Heart right ventricle (tissue), 16 donors: ENCODE measurements at regions of chr17 and their contacts with region 1.

Region 1: GRCh38 chr17:8041249-8041928 is 2.5 kb downstream of the ALOX15B start:
- DNase-seq: no peak
- ATAC-seq: peak in 7 of 8 donors; percentile 30 to 88 (median 66)
- H3K4me3 ChIP-seq: no peak overlapping the region
- H3K27ac ChIP-seq: peak overlapping the region in 1 of 10 donors; percentile 51
- H3K4me1 ChIP-seq: peaks cover 0 to 28% (median 4%) of the 10 kb centered on the region in 9 donors
- H3K27me3 ChIP-seq: peaks cover 0 to 44% (median 34%) of the 10 kb centered on the region in 7 donors
- CTCF ChIP-seq: peak; percentile 29 to 71 (median 66)

Region 2: DNA sequence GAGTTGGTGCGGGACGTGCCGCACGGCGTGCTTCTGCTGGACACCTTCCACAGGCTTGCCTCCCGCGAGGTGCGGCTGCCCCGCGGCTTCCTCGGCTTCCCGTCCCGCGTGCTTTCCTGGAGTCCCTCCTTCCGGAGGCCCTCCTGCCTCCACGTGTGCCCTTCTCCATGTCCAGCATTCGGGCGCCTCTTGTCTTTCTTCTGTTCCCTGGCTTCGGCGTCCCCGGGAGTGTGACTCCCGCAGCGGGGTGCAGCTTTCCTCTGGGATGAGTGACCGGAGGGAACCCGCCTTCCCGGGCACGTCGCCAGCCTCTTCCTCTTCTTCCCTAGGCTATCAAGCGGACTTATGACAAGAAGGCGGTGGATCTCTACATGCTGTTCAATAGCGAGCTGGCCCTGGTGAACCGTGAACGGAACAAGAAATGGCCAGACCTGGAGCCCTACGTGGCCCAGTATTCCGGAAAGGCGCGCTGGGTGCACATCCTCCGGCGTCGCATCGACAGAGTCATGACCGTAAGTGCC is 300.8 kb before region 1 on chr17:
- intact Hi-C with region 1: loop called in 3 of 10 experiments (anchors 5 to 10 kb)
- DNase-seq: peak in 1 of 2 donors; percentile 27
- ATAC-seq: peak in 2 of 8 donors; percentile 13 to 43
- H3K4me3 ChIP-seq: peak overlapping the region in 6 of 10 donors; percentile 7 to 41 (median 22)
- H3K27ac ChIP-seq: no peak overlapping the region
- H3K4me1 ChIP-seq: peaks cover 0 to 15% (median 0%) of the 10 kb centered on the region in 9 donors
- H3K27me3 ChIP-seq: peaks cover 0 to 31% (median 14%) of the 10 kb centered on the region in 7 donors
- CTCF ChIP-seq: no peak

Region 3: DNA sequence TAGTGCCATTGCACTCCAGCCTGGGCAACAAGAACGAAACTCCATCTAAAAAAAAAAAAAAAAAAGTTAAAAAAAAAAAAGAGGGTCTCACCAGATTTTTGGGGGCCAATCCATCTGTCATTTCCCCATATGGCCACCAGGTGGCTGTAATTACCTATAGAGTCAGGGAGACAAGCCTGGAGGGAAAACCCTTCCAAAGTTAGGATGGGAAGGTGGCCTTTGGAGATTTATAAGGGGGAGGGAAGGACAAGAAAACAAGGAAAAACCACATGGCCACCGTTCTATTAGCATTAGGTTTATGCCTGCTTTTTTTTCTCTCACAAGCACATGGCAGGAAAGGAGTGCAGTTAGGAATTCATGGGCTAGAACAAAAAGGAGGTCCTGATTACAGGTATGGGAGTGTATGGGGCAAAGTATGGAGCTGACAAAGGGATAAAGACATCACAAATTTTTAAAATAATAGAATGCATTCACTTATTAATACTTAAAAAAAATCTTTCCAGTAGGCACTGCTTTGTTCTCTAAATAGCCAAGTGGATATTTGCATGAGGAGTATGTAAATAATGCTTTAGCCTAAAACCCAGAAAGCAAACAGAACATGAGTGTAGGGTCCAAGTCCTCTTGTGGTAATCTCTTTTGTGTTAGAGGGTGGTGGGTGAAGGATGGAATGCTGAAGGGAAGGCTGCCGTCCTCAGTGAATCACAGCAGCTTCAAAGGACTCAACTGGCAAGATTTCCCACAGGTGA is 178.5 kb before region 1 on chr17:
- intact Hi-C with region 1: loop called in 4 of 10 experiments (anchors 5 to 10 kb)
- DNase-seq: peak in 1 of 2 donors; percentile 62
- ATAC-seq: no peak
- H3K4me3 ChIP-seq: no peak overlapping the region
- H3K27ac ChIP-seq: no peak overlapping the region
- H3K4me1 ChIP-seq: peaks cover 0 to 26% (median 14%) of the 10 kb centered on the region in 9 donors
- H3K27me3 ChIP-seq: no peaks in the 10 kb centered on the region
- CTCF ChIP-seq: peak; percentile 65 to 83 (median 81)

Region 4: DNA sequence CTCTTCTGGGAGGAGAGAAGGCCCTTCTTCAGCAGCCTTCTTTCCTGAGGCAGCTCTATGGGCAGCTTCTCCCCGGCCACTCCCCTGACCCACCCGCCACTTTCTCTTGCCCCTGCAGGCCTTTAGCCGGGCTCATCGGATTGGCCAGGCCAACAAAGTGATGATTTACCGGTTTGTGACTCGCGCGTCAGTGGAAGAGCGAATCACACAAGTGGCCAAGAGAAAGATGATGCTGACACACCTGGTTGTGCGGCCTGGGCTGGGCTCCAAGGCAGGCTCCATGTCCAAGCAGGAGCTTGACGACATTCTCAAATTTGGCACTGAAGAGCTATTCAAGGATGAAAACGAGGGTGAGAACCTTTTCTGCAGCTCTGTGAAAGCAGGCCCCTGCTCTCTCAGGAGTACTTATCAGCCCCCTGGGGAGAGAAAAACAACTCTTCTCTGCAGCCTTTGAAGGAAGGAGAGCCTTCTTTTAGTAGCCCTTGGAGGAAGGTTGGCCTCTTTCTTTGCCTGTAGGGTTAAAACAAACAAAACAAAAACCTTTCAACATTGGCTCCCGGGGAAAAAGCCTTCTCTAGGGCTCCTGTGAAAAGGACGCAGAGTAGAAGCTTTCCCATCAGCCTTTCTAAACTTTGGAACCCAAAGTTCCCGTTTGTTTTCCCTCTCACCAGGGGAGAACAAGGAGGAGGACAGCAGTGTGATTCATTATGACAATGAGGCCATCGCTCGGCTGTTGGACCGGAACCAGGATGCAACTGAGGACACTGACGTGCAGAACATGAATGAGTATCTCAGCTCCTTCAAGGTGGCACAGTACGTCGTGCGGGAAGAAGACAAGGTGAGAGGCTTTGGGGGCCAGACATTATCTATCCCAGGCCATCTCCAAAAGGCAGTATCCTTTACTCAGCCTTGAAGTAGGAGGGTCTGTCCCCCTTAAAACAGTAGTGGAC is 138.0 kb before region 1 on chr17:
- intact Hi-C with region 1: loop called in 1 of 10 experiments (anchors 10 kb)
- DNase-seq: no peak
- ATAC-seq: no peak
- H3K4me3 ChIP-seq: no peak overlapping the region
- H3K27ac ChIP-seq: no peak overlapping the region
- H3K4me1 ChIP-seq: no peaks in the 10 kb centered on the region
- H3K27me3 ChIP-seq: no peaks in the 10 kb centered on the region
- CTCF ChIP-seq: no peak